HCT116 (cell line): ENCODE measurements at regions of chr1 and their contacts with region 1.

Region 1: GRCh38 chr1:64136752-64137411 is 66.5 kb upstream of the UBE2U start:
- DNase-seq: peak; percentile 46
- ATAC-seq: peak; percentile 94
- H3K4me3 ChIP-seq: no peak overlapping the region
- H3K27ac ChIP-seq: no peak overlapping the region
- H3K4me1 ChIP-seq: peaks cover 0 to 12% of the 10 kb centered on the region in 2 experiments; a peak in 2 of 4 replicates
- H3K27me3 ChIP-seq: no peaks in the 10 kb centered on the region
- CTCF ChIP-seq: peak; percentile 84 to 96 (median 93)
- POLR2A ChIP-seq: no peak
- RAD21 ChIP-seq: peak; percentile 88

Region 2: GRCh38 chr1:63557365-63557987 is 579.4 kb before region 1 on chr1:
- CTCF ChIA-PET with region 1: no interaction called
- POLR2A ChIA-PET with region 1: interaction called, 3 read pairs
- RAD21 ChIA-PET with region 1: no interaction called
- intact Hi-C with region 1: loop called (anchors 5 kb)
- DNase-seq: peak; percentile 35
- ATAC-seq: no peak; the same call in none of the 2 replicates
- H3K4me3 ChIP-seq: no peak overlapping the region
- H3K27ac ChIP-seq: no peak overlapping the region
- H3K4me1 ChIP-seq: no peaks in the 10 kb centered on the region
- H3K27me3 ChIP-seq: no peaks in the 10 kb centered on the region
- CTCF ChIP-seq: peak; percentile 57 to 80 (median 74); a peak in 5 of 6 replicates
- POLR2A ChIP-seq: no peak
- RAD21 ChIP-seq: peak; percentile 57

Region 3: GRCh38 chr1:63615768-63616420 is 521.0 kb before region 1 on chr1:
- CTCF ChIA-PET with region 1: no interaction called
- POLR2A ChIA-PET with region 1: no interaction called
- RAD21 ChIA-PET with region 1: no interaction called
- intact Hi-C with region 1: loop called (anchors 1 kb)
- DNase-seq: peak; percentile 58
- ATAC-seq: peak; percentile 89
- H3K4me3 ChIP-seq: no peak overlapping the region
- H3K27ac ChIP-seq: no peak overlapping the region
- H3K4me1 ChIP-seq: peaks cover 0 to 4% of the 10 kb centered on the region in 2 experiments; a peak in 1 of 4 replicates
- H3K27me3 ChIP-seq: no peaks in the 10 kb centered on the region
- CTCF ChIP-seq: peak; percentile 58 to 83 (median 73); a peak in 5 of 6 replicates
- POLR2A ChIP-seq: no peak
- RAD21 ChIP-seq: peak; percentile 87

Region 4: DNA sequence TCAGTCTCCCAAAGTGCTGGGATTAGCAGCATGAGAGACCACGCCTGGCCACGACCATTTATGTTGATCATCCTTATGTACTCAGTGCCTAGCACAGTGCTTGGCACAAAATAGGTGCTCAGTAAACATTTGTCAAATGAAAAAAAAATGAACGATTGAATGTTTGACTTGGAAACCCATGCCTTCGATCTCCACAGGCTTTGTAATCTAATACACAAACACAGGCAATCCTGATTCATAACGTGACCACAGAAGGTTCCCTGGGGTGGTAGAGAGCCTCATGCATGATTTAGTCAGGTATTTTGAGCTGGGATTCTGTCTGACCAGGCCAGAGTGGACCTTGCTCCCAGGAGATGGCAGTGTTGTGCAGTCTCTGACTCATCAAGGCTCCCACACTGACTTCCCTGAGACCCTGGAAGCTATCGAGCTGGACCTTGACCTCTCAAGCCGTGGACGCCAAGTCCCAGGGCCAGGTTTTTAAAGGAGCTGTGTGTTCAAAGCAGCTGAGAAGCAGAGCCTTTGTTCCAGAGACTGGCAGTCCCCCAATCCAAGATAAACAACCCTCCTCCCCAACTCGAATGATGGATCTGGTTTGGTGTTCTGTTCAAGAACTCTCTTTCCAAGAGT is 462.5 kb before region 1 on chr1:
- CTCF ChIA-PET with region 1: interaction called, 14 read pairs
- POLR2A ChIA-PET with region 1: no interaction called
- RAD21 ChIA-PET with region 1: interaction called, 5 to 10 read pairs
- intact Hi-C with region 1: loop called (anchors 5 kb)
- DNase-seq: peak; percentile 67
- ATAC-seq: peak; percentile 96
- H3K4me3 ChIP-seq: no peak overlapping the region
- H3K27ac ChIP-seq: no peak overlapping the region
- H3K4me1 ChIP-seq: peaks cover 7 to 28% of the 10 kb centered on the region in 2 experiments; a peak in 3 of 4 replicates
- H3K27me3 ChIP-seq: no peaks in the 10 kb centered on the region
- CTCF ChIP-seq: peak; percentile 61 to 79 (median 77); a peak in 5 of 6 replicates
- POLR2A ChIP-seq: no peak
- RAD21 ChIP-seq: peak; percentile 88

Region 5: DNA sequence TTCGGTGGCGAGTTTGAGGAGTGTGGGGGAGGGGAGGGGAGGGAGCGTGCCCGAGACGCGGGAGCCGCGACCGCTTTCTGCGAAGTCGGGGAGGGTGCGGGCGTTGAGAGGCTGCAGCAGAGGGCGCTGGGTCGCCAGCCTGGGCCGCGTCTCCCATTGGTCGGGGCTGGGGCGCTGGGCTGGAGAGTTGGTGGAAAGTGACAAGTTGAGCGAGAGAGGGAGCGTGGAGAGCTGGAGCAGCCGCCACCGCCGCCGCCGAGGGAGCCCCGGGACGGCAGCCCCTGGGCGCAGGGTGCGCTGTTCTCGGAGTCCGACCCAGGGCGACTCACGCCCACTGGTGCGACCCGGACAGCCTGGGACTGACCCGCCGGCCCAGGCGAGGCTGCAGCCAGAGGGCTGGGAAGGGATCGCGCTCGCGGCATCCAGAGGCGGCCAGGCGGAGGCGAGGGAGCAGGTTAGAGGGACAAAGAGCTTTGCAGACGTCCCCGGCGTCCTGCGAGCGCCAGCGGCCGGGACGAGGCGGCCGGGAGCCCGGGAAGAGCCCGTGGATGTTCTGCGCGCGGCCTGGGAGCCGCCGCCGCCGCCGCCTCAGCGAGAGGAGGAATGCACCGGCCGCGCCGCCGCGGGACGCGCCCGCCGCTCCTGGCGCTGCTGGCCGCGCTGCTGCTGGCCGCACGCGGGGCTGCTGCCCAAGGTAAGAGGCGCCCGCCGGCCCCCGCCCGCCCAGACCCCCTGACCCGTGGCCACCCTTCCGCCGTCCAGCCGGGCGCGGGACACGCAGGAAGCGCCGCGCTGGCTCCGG is 362.9 kb before region 1 on chr1 and contains the start of gene ROR1:
- CTCF ChIA-PET with region 1: interaction called, 4 read pairs
- POLR2A ChIA-PET with region 1: no interaction called
- RAD21 ChIA-PET with region 1: interaction called in 1 of 2 experiments, 4 read pairs
- intact Hi-C with region 1: loop called (anchors 5 kb)
- DNase-seq: peak; percentile 72
- ATAC-seq: peak; percentile 95
- H3K4me3 ChIP-seq: peak within 1 kb of the TSS; percentile 58 to 70
- H3K27ac ChIP-seq: no peak within 1 kb of the TSS; the same call in 1 of the 2 replicates
- H3K4me1 ChIP-seq: peaks cover 11 to 24% of the 10 kb centered on the region in 2 experiments; a peak in 3 of 4 replicates
- H3K27me3 ChIP-seq: no peaks in the 10 kb centered on the region
- CTCF ChIP-seq: peak; percentile 52 to 67 (median 67)
- POLR2A ChIP-seq: no peak
- RAD21 ChIP-seq: peak; percentile 76
- total RNA-seq, gene ROR1: 2.7 TPM

Region 6: DNA sequence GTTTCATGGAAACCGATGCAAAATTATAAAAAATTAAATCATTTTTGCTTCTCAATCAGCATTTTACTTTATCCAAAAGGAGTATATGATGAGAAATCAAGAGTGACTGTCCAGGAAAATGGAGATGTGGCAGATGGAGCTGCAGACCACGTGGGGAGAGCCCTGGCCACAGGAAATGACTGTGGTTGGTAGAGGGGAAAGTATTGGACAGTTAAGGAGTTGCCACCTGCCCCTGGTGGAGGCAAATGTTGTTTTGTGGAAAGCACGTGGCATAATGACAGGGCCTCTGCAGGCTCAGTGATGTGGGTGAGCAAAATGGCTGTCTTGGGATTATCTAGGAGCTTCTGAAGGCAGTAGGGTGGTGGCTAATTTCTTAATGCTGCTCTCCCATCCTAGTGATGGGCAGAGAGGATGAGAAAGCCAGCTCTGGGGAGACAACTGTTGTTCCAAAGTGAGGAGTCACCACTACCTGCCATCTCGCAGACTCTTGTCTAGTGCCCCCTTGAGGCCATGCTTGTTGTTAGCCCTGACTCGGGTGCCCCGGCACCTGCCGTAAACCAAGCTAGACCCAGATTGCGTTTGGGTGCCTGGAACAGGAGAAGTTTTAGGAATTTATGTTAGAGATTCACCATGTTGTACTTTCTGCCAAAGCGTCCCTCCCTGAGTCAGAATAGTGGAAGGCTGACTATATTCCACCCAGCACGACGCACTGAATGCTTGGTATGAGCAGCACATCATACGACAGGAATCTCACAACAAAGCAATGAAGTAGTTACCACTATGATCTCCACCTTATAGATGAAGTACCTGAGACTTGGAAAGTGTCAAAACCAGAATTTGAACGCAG is 219.1 kb before region 1 on chr1:
- CTCF ChIA-PET with region 1: interaction called, 28 read pairs
- POLR2A ChIA-PET with region 1: no interaction called
- RAD21 ChIA-PET with region 1: no interaction called
- intact Hi-C with region 1: loop called (anchors 1 kb)
- DNase-seq: peak; percentile 32
- ATAC-seq: peak; percentile 71
- H3K4me3 ChIP-seq: no peak overlapping the region
- H3K27ac ChIP-seq: no peak overlapping the region
- H3K4me1 ChIP-seq: peaks cover 0 to 15% of the 10 kb centered on the region in 2 experiments; a peak in 2 of 4 replicates
- H3K27me3 ChIP-seq: no peaks in the 10 kb centered on the region
- CTCF ChIP-seq: peak; percentile 32 to 72 (median 65); a peak in 5 of 6 replicates
- POLR2A ChIP-seq: no peak
- RAD21 ChIP-seq: peak; percentile 45; the same call in 1 of the 2 replicates

Region 7: DNA sequence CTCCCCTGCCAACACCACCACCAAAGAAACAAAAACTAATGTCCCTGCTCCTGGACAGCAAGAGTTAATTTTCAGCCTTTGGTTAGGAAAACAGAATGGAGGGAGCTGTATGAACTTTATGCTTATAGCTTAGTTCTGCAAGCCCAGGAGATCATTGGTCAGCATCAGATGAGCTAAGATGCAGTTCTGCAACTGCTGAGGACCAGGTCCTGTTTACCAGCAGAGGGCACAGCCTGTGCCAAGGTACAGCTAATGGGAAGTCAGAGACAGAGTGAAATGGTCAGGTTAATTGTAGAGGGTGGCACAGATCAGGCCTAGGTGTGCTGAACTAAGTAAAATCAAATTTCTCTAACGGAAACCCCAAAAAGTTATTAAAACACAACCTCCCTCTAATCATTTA is 201.7 kb before region 1 on chr1:
- CTCF ChIA-PET with region 1: interaction called, 35 read pairs
- POLR2A ChIA-PET with region 1: no interaction called
- RAD21 ChIA-PET with region 1: interaction called, 8 to 10 read pairs
- intact Hi-C with region 1: loop called (anchors 1 kb)
- DNase-seq: no peak
- ATAC-seq: peak; percentile 74
- H3K4me3 ChIP-seq: no peak overlapping the region
- H3K27ac ChIP-seq: no peak overlapping the region
- H3K4me1 ChIP-seq: no peaks in the 10 kb centered on the region
- H3K27me3 ChIP-seq: no peaks in the 10 kb centered on the region
- CTCF ChIP-seq: peak; percentile 39 to 48 (median 40); a peak in 4 of 6 replicates
- POLR2A ChIP-seq: no peak
- RAD21 ChIP-seq: peak; percentile 65